ENCODE measurements at regions of chr14 and their contacts with region 1.

Region 1: GRCh38 chr14:24241829-24242443 is 487 bp downstream of the TINF2 start:
- DNase-seq: no peak
- ATAC-seq: peak; percentile 83
- H3K4me3 ChIP-seq: peak overlapping the region; percentile 71 to 91 (median 88)
- H3K4me3 Mint-ChIP-seq: peak overlapping the region; percentile 98
- H3K27ac ChIP-seq: peak overlapping the region; percentile 98 to 100
- H3K27ac Mint-ChIP-seq: peak overlapping the region; percentile 100
- H3K4me1 ChIP-seq: peaks cover 47 to 49% of the 10 kb centered on the region in 2 donors
- H3K4me1 Mint-ChIP-seq: peaks cover 64% of the 10 kb centered on the region
- H3K27me3 ChIP-seq: no peaks in the 10 kb centered on the region
- H3K27me3 Mint-ChIP-seq: no peaks in the 10 kb centered on the region
- CTCF ChIP-seq: peak; percentile 23

Region 2: GRCh38 chr14:24108336-24108874 is 133.5 kb before region 1 on chr14:
- CTCF ChIA-PET with region 1: interaction called, 12 read pairs
- POLR2A ChIA-PET with region 1: no interaction called
- intact Hi-C with region 1: no loop called
- DNase-seq: no peak
- ATAC-seq: peak; percentile 14
- H3K4me3 ChIP-seq: no peak overlapping the region
- H3K4me3 Mint-ChIP-seq: no peak overlapping the region
- H3K27ac ChIP-seq: peak overlapping the region; percentile 44 to 68
- H3K27ac Mint-ChIP-seq: peak overlapping the region; percentile 95
- H3K4me1 ChIP-seq: peaks cover 10 to 13% of the 10 kb centered on the region in 2 donors
- H3K4me1 Mint-ChIP-seq: peaks cover 11% of the 10 kb centered on the region
- H3K27me3 ChIP-seq: no peaks in the 10 kb centered on the region
- H3K27me3 Mint-ChIP-seq: no peaks in the 10 kb centered on the region
- CTCF ChIP-seq: no peak

Region 3: GRCh38 chr14:24146978-24147760 is 94.8 kb before region 1 on chr14 and contains the start of gene RNF31:
- CTCF ChIA-PET with region 1: no interaction called
- POLR2A ChIA-PET with region 1: interaction called, 5 read pairs
- intact Hi-C with region 1: loop called (anchors 1 kb)
- DNase-seq: peak; percentile 98
- ATAC-seq: peak; percentile 84
- H3K4me3 ChIP-seq: peak within 1 kb of the TSS; percentile 83 to 95 (median 94)
- H3K4me3 Mint-ChIP-seq: peak within 1 kb of the TSS; percentile 95
- H3K27ac ChIP-seq: peak within 1 kb of the TSS; percentile 77 to 90
- H3K27ac Mint-ChIP-seq: peak within 1 kb of the TSS; percentile 95
- H3K4me1 ChIP-seq: peaks cover 21 to 35% of the 10 kb centered on the region in 2 donors
- H3K4me1 Mint-ChIP-seq: peaks cover 50% of the 10 kb centered on the region
- H3K27me3 ChIP-seq: no peaks in the 10 kb centered on the region
- H3K27me3 Mint-ChIP-seq: no peaks in the 10 kb centered on the region
- CTCF ChIP-seq: no peak
- total RNA-seq, gene RNF31: 103 and 114 TPM in 2 replicates

Region 4: DNA sequence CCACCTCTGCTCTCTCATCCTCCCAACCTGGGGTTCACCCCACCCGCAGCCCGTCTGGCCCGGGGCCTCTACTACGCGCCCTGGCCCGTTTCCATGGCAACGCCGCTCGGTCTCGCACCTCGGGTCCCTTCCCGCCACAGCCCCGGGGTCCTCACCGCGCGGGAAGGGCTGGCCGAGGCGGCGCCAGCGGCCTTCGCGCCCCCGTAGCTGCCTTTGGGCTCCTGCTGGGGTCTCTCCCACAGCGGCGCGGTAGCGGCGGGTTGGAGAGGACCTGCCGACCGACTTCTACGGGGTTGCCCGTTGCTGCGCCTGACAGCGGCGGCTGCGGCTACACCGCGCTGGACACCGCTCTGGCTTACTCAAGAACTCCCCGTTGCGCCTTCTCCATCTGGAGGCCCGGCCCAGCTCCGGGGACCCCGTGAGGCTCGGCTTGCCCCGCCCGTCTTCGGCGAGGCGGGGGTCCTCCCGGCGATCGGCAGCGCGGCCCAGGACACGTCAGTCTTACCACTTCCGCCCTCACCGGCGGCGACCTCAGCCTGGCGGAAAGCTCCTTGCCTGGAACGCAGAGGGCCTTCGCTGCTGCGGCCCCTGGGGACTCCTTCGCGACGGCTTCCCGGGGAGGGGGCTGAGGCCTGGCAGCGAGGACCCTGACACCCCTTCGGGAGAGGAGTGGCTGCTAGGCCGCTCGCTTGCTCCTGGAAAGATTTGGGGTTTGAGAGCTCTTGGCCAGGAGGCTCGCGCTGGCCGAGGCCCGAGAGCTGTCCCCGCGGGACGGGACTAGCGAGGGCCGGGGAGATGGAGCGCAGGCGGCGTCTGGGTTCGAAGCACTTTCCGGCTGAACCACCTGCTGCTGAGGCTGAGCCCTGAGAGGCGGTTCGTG is 46.5 kb before region 1 on chr14 and contains the start of gene TM9SF1:
- CTCF ChIA-PET with region 1: interaction called, 14 read pairs
- POLR2A ChIA-PET with region 1: interaction called, 12 read pairs
- intact Hi-C with region 1: loop called (anchors 1 kb)
- DNase-seq: peak; percentile 96
- ATAC-seq: peak; percentile 90
- H3K4me3 ChIP-seq: peak within 1 kb of the TSS; percentile 82 to 99 (median 83)
- H3K4me3 Mint-ChIP-seq: peak within 1 kb of the TSS; percentile 89
- H3K27ac ChIP-seq: peak within 1 kb of the TSS; percentile 98 to 99
- H3K27ac Mint-ChIP-seq: peak within 1 kb of the TSS; percentile 99
- H3K4me1 ChIP-seq: peaks cover 25 to 26% of the 10 kb centered on the region in 2 donors
- H3K4me1 Mint-ChIP-seq: peaks cover 49% of the 10 kb centered on the region
- H3K27me3 ChIP-seq: no peaks in the 10 kb centered on the region
- H3K27me3 Mint-ChIP-seq: no peaks in the 10 kb centered on the region
- CTCF ChIP-seq: no peak
- total RNA-seq, gene TM9SF1: 24.5 and 33.9 TPM in 2 replicates

Region 5: DNA sequence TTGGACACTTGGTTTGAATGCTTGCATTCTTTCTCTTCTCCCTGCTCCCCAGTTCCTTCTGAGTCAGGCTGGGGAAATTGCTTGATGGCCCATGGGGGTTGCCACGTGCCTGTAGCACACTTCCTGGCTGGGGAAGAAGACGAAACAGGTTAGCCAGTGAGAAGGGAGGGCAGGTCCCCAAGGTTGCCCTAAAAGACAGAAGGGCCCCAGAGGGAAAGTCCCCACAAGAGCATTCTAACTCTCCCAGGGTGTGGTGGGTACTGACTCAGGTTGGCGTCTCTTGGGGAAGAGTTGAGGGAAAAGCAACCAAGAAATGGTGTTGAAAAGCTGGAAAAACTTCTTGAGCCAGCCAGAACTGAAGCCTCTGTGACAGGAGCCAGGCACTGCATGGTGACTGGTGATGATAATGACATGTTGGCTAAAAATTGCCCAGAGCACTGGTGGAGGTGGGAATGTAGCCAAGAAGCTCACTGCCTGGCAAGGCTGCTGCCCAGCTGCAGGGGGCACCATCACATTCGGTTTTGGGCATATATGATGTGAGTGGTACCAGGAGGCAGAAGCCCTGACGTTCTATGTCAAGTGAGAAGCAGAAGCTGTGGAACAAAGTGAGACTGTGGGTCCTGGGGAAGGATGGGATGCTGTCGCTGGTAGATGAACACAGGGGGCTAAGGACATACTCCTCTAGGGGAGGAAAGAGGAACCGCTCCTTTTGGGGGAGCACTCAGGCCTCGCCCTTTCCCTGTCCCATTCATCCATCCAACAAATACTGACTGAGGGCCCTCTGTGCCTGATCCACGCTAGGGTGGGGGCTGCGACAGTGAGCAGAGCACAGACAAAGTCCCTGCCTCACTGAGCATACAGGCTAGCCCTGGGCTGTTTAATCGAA is 37.6 kb after region 1 on chr14:
- CTCF ChIA-PET with region 1: interaction called, 37 read pairs
- POLR2A ChIA-PET with region 1: interaction called, 7 read pairs
- intact Hi-C with region 1: loop called (anchors 2 kb)
- DNase-seq: peak; percentile 87
- ATAC-seq: peak; percentile 90
- H3K4me3 ChIP-seq: peak overlapping the region in 1 of 5 experiments; percentile 10
- H3K4me3 Mint-ChIP-seq: peak overlapping the region; percentile 75
- H3K27ac ChIP-seq: peak overlapping the region; percentile 65 to 80
- H3K27ac Mint-ChIP-seq: peak overlapping the region; percentile 93
- H3K4me1 ChIP-seq: peaks cover 38 to 60% of the 10 kb centered on the region in 2 donors
- H3K4me1 Mint-ChIP-seq: peaks cover 66% of the 10 kb centered on the region
- H3K27me3 ChIP-seq: no peaks in the 10 kb centered on the region
- H3K27me3 Mint-ChIP-seq: no peaks in the 10 kb centered on the region
- CTCF ChIP-seq: peak; percentile 53

Region 6: DNA sequence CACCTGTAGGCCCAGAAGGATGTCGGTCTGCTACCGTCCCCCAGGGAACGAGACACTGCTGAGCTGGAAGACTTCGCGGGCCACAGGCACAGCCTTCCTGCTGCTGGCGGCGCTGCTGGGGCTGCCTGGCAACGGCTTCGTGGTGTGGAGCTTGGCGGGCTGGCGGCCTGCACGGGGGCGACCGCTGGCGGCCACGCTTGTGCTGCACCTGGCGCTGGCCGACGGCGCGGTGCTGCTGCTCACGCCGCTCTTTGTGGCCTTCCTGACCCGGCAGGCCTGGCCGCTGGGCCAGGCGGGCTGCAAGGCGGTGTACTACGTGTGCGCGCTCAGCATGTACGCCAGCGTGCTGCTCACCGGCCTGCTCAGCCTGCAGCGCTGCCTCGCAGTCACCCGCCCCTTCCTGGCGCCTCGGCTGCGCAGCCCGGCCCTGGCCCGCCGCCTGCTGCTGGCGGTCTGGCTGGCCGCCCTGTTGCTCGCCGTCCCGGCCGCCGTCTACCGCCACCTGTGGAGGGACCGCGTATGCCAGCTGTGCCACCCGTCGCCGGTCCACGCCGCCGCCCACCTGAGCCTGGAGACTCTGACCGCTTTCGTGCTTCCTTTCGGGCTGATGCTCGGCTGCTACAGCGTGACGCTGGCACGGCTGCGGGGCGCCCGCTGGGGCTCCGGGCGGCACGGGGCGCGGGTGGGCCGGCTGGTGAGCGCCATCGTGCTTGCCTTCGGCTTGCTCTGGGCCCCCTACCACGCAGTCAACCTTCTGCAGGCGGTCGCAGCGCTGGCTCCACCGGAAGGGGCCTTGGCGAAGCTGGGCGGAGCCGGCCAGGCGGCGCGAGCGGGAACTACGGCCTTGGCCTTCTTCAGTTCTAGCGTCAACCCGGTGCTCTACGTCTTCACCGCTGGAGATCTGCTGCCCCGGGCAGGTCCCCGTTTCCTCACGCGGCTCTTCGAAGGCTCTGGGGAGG is 69.0 kb after region 1 on chr14 and contains the start of gene LTB4R:
- CTCF ChIA-PET with region 1: interaction called, 112 read pairs
- POLR2A ChIA-PET with region 1: interaction called, 12 read pairs
- intact Hi-C with region 1: loop called (anchors 1 kb)
- DNase-seq: peak; percentile 90
- ATAC-seq: peak; percentile 76
- H3K4me3 ChIP-seq: peak within 1 kb of the TSS; percentile 8 to 71 (median 57)
- H3K4me3 Mint-ChIP-seq: peak within 1 kb of the TSS; percentile 84
- H3K27ac ChIP-seq: peak within 1 kb of the TSS; percentile 65 to 83
- H3K27ac Mint-ChIP-seq: peak within 1 kb of the TSS; percentile 91
- H3K4me1 ChIP-seq: peaks cover 38 to 57% of the 10 kb centered on the region in 2 donors
- H3K4me1 Mint-ChIP-seq: peaks cover 61% of the 10 kb centered on the region
- H3K27me3 ChIP-seq: no peaks in the 10 kb centered on the region
- H3K27me3 Mint-ChIP-seq: no peaks in the 10 kb centered on the region
- CTCF ChIP-seq: peak; percentile 67
- total RNA-seq, gene LTB4R: 8.8 and 9.2 TPM in 2 replicates

Region 7: GRCh38 chr14:24431569-24432258 is 189.8 kb after region 1 on chr14:
- CTCF ChIA-PET with region 1: interaction called, 48 read pairs
- POLR2A ChIA-PET with region 1: interaction called, 28 read pairs
- intact Hi-C with region 1: loop called (anchors 1 kb)
- DNase-seq: peak; percentile 90
- ATAC-seq: peak; percentile 41
- H3K4me3 ChIP-seq: peak overlapping the region in 4 of 5 experiments; percentile 77 to 98 (median 93)
- H3K4me3 Mint-ChIP-seq: peak overlapping the region; percentile 94
- H3K27ac ChIP-seq: peak overlapping the region; percentile 98 to 99
- H3K27ac Mint-ChIP-seq: peak overlapping the region; percentile 98
- H3K4me1 ChIP-seq: peaks cover 32 to 43% of the 10 kb centered on the region in 2 donors
- H3K4me1 Mint-ChIP-seq: peaks cover 50% of the 10 kb centered on the region
- H3K27me3 ChIP-seq: no peaks in the 10 kb centered on the region
- H3K27me3 Mint-ChIP-seq: no peaks in the 10 kb centered on the region
- CTCF ChIP-seq: peak; percentile 87